ENCODE measurements at regions of chr12 and their contacts with region 1.

Region 1: GRCh38 chr12:64890873-64891468 is 66.5 kb downstream of the TBC1D30 start:
- DNase-seq: peak; percentile 61
- ATAC-seq: peak; percentile 70
- H3K4me3 ChIP-seq: no peak overlapping the region
- H3K27ac ChIP-seq: no peak overlapping the region
- H3K4me1 ChIP-seq: peaks cover 10% of the 10 kb centered on the region
- H3K27me3 ChIP-seq: no peaks in the 10 kb centered on the region; a peak in 1 of 5 replicates
- CTCF ChIP-seq: peak; percentile 81
- EP300 ChIP-seq: no peak
- POLR2A ChIP-seq: no peak
- RAD21 ChIP-seq: peak; percentile 87

Region 2: GRCh38 chr12:65106948-65107347 is 216.0 kb after region 1 on chr12:
- CTCF ChIA-PET with region 1: interaction called, 16 read pairs
- POLR2A ChIA-PET with region 1: no interaction called
- in situ Hi-C with region 1: no loop called
- intact Hi-C with region 1: no loop called
- DNase-seq: no peak
- ATAC-seq: no peak
- H3K4me3 ChIP-seq: no peak overlapping the region
- H3K27ac ChIP-seq: no peak overlapping the region
- H3K4me1 ChIP-seq: no peaks in the 10 kb centered on the region
- H3K27me3 ChIP-seq: 0 out of 5 replicates have a peak, but pooled peaks cover 0 to 1% of the 10 kb centered on the region in 2 experiments
- CTCF ChIP-seq: peak; percentile 20; the same call in 1 of the 2 replicates
- EP300 ChIP-seq: no peak
- POLR2A ChIP-seq: no peak
- RAD21 ChIP-seq: no peak

Region 3: DNA sequence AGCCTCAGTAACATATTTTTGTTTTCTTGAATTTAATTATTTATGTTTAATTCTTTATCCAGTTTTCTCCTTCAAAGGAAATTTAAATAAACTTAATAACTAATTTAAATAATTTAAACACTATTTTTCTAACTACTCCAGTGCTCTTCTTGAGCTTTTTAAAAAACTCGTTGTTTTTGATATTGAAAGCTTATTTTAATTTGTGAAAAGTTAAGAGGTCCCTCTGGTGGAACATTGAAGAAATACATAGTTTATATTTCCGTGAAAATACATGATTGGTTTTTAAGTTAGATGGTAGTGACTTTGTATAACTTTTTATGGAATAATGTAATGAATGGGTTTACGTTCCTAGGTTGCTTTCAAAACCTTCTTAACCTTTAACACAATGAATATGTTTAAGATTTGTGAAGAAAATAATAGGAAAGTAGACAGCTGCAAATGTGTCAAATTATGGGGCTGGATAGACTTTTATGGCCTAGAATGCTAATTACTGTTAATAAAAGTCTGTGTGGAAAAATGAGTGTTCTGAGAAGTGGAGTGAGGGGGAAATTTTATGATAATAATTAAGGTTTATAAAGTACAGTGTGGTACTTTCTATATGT is 341.6 kb after region 1 on chr12:
- CTCF ChIA-PET with region 1: no interaction called
- POLR2A ChIA-PET with region 1: no interaction called
- in situ Hi-C with region 1: no loop called
- intact Hi-C with region 1: loop called (anchors 1 kb)
- DNase-seq: no peak
- ATAC-seq: no peak
- H3K4me3 ChIP-seq: no peak overlapping the region
- H3K27ac ChIP-seq: no peak overlapping the region
- H3K4me1 ChIP-seq: no peaks in the 10 kb centered on the region
- H3K27me3 ChIP-seq: no peaks in the 10 kb centered on the region
- CTCF ChIP-seq: no peak
- EP300 ChIP-seq: no peak
- POLR2A ChIP-seq: no peak
- RAD21 ChIP-seq: no peak

Region 4: GRCh38 chr12:65306366-65307168 is 415.6 kb after region 1 on chr12:
- CTCF ChIA-PET with region 1: interaction called, 3 read pairs
- POLR2A ChIA-PET with region 1: no interaction called
- in situ Hi-C with region 1: no loop called
- intact Hi-C with region 1: loop called (anchors 10 kb)
- DNase-seq: peak; percentile 37
- ATAC-seq: peak; percentile 66
- H3K4me3 ChIP-seq: no peak overlapping the region
- H3K27ac ChIP-seq: no peak overlapping the region
- H3K4me1 ChIP-seq: peaks cover 6% of the 10 kb centered on the region; the same call in 1 of the 2 replicates
- H3K27me3 ChIP-seq: no peaks in the 10 kb centered on the region
- CTCF ChIP-seq: peak; percentile 75
- EP300 ChIP-seq: no peak
- POLR2A ChIP-seq: no peak
- RAD21 ChIP-seq: peak; percentile 66

Measured in HepG2 (cell line).